GM10248 (cell line): ENCODE measurements at regions of chr22 and their contacts with region 1.

Region 1: DNA sequence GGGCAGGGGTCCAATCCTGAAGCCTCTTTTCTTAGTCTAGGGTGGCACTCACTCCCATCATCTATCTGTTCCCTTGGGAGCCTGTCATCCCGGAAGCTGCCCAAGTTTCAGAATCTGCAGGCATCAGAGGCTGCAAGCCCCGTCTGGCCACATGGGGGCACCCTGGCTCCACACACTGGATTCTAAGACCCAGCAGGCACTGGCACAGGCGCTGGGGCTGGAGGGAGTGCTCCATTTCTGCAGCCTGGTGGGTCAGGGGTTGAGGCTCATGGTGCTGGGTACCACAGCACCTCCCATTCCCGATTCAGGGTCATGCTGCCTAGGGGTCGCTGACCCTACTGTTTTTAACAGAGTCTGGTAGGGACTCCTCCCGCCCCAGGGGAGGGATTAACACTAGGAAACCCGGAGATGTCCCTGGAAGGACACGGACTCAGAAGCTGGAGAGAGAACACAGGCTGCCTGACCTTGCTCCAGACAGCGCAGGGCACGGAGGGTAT is 243.9 kb upstream of the SYN3 start:
- DNase-seq: peak; percentile 78
- CTCF ChIP-seq: peak; percentile 98

Region 2: GRCh38 chr22:33271390-33272161 is 30.5 kb before region 1 on chr22:
- CTCF ChIA-PET with region 1: interaction called, 25 read pairs
- POLR2A ChIA-PET with region 1: no interaction called
- DNase-seq: peak; percentile 57
- CTCF ChIP-seq: no peak

Region 3: GRCh38 chr22:33314316-33314715 is 12.2 kb after region 1 on chr22:
- CTCF ChIA-PET with region 1: interaction called, 17 read pairs
- POLR2A ChIA-PET with region 1: no interaction called
- DNase-seq: no peak
- CTCF ChIP-seq: no peak

Region 4: GRCh38 chr22:33467620-33468095 is 165.6 kb after region 1 on chr22:
- CTCF ChIA-PET with region 1: interaction called, 15 read pairs
- POLR2A ChIA-PET with region 1: no interaction called
- DNase-seq: no peak
- CTCF ChIP-seq: no peak

Region 5: GRCh38 chr22:33563220-33563964 is 261.3 kb after region 1 on chr22:
- CTCF ChIA-PET with region 1: interaction called, 10 read pairs
- POLR2A ChIA-PET with region 1: no interaction called
- DNase-seq: no peak
- CTCF ChIP-seq: no peak

Region 6: DNA sequence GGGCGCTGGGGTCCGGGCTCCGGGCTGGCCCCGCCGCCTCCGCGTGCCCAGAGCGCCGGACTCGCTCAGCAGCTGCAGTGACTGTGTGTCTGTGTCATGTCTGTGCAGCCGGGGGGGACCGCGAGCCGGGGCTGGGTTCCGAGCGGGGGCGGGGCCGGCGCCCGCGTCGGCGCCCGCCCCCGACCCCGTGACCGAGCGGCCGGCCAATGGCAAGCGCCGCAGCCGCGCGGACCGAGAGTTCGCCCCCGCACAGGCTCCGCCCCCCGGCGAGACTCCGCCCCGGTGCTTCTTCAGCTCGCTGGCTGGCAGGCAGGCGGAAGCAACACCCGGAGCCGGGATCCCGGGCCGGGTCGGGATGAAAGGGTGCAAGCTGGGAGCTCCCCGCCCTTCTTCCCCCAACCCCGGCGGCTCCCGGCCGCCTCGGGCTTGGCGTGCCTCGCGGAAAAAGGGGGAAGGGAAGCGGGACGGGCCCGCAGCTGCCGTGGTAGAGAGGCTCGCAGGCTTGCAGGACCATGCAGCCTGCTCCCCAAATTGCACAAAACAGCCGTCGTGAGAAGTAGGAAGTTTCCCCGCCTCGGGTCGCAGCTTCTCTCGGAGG is 618.9 kb after region 1 on chr22:
- CTCF ChIA-PET with region 1: interaction called, 18 read pairs
- POLR2A ChIA-PET with region 1: no interaction called
- DNase-seq: peak; percentile 90
- CTCF ChIP-seq: no peak